Caco-2 (cell line): ENCODE measurements at regions of chr3 and their contacts with region 1.

Region 1: GRCh38 chr3:27659279-27660021 is 62.7 kb downstream of the EOMES start:
- DNase-seq: peak; percentile 62 to 72
- H3K4me3 ChIP-seq: no peak overlapping the region
- H3K4me3 Mint-ChIP-seq: no peak overlapping the region
- H3K27ac Mint-ChIP-seq: no peak overlapping the region
- H3K4me1 ChIP-seq: no peaks in the 10 kb centered on the region
- H3K4me1 Mint-ChIP-seq: no peaks in the 10 kb centered on the region
- H3K27me3 ChIP-seq: no peaks in the 10 kb centered on the region
- H3K27me3 Mint-ChIP-seq: no peaks in the 10 kb centered on the region
- CTCF ChIP-seq: peak; percentile 72 to 81

Region 2: DNA sequence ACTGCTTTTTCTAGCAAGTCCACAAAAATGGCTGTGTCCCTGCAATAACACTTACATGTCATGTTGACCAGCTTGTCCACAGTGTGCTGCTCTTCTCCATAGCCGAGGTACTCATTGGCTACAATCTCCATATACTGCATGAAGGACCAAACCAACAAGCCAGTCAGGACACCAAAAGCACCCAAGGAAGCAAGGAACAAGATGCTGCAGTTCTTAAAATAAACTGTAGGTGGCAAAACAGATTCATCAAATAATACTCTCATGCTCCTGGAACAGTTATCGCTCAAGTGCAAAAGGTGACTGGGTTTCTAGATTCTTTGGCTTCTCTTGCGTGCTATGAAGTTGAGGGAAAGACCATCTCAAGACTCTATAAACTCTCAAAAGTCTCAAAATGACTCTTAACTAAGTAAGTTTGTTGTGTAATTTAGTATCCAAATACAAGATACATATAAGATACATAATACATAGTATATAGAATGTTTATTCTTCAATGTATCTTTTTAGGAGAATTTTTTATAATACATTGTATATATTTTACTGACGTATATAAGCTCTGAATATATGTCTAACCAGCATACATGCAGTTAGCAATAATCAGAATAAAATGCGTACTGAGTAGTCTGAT is 347.3 kb before region 1 on chr3:
- CTCF ChIA-PET with region 1: no interaction called
- POLR2A ChIA-PET with region 1: no interaction called
- intact Hi-C with region 1: loop called (anchors 1 kb)
- DNase-seq: peak in 1 of 2 experiments; percentile 59
- H3K4me3 ChIP-seq: no peak overlapping the region
- H3K4me3 Mint-ChIP-seq: no peak overlapping the region
- H3K27ac Mint-ChIP-seq: no peak overlapping the region
- H3K4me1 ChIP-seq: peaks cover 3% of the 10 kb centered on the region; the same call in 1 of the 2 replicates
- H3K4me1 Mint-ChIP-seq: peaks cover 8% of the 10 kb centered on the region
- H3K27me3 ChIP-seq: no peaks in the 10 kb centered on the region
- H3K27me3 Mint-ChIP-seq: peaks cover 2% of the 10 kb centered on the region
- CTCF ChIP-seq: peak; percentile 45 to 64

Region 3: DNA sequence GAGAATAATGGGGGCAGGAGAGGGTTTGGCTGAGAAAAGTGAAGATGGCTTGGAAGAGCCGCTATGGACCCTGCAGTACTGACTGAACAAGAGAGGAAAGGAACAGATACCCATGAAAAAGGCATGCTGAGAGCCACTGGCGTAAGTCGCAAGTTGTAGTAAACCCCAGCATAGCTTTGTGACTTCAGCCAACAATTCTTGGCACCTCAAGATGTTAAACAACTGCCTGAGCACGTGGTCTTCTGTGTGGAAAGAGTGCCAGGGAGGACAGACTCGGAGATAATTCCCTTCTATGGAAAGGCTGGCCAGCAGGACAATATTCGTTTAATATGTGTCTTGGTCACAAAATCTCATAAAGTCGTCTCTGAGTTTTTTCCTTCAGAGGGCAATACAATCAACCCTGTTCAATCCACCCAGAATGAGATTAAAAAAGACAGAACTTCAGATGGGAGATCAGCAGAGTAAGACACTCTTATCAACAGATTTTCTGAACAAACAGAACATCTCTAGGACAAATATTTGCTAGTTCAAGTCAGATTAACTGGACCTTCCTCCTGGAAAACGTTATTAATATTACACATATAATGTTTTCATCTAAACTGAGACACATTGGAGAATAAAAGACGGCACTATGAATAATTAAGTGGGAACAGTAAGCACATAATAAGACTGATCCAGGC is 339.5 kb before region 1 on chr3:
- CTCF ChIA-PET with region 1: no interaction called
- POLR2A ChIA-PET with region 1: no interaction called
- intact Hi-C with region 1: loop called (anchors 1 kb)
- DNase-seq: no peak
- H3K4me3 ChIP-seq: no peak overlapping the region
- H3K4me3 Mint-ChIP-seq: no peak overlapping the region
- H3K27ac Mint-ChIP-seq: no peak overlapping the region
- H3K4me1 ChIP-seq: peaks cover 3% of the 10 kb centered on the region; the same call in 1 of the 2 replicates
- H3K4me1 Mint-ChIP-seq: peaks cover 8% of the 10 kb centered on the region
- H3K27me3 ChIP-seq: no peaks in the 10 kb centered on the region
- H3K27me3 Mint-ChIP-seq: no peaks in the 10 kb centered on the region
- CTCF ChIP-seq: no peak

Region 4: DNA sequence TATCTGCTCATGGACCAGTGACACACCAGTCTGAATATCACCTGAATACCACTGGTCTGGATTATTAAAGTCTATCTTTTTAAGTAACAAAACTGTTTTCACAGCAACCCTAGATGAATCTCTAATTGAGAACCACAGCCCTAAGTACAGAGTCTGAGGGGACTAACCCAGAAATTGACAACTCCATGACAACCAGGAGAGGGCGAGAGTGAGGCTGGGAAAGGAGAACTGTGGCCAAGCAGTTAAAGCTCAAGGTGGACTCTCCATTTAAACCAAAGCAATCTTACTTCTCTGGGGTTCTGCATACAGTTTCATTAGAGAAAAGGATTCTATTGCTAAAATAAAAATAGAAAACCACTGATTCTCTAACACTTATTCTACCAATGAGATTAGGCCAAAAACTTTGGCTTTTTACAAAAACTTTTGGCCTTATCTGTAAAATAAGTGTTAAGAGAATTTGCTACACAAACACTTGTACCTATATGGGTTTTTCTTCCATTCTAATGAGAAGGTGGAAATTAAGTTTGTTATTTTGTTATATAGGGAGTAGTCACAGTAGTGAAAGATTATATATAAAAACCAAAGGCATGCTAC is 301.7 kb before region 1 on chr3:
- CTCF ChIA-PET with region 1: no interaction called
- POLR2A ChIA-PET with region 1: no interaction called
- intact Hi-C with region 1: loop called (anchors 5 kb)
- DNase-seq: peak; percentile 49 to 64
- H3K4me3 ChIP-seq: no peak overlapping the region
- H3K4me3 Mint-ChIP-seq: no peak overlapping the region
- H3K27ac Mint-ChIP-seq: no peak overlapping the region
- H3K4me1 ChIP-seq: no peaks in the 10 kb centered on the region
- H3K4me1 Mint-ChIP-seq: no peaks in the 10 kb centered on the region
- H3K27me3 ChIP-seq: no peaks in the 10 kb centered on the region
- H3K27me3 Mint-ChIP-seq: peaks cover 10% of the 10 kb centered on the region
- CTCF ChIP-seq: peak in 1 of 2 experiments; percentile 73

Region 5: GRCh38 chr3:27643355-27643754 is 16.1 kb before region 1 on chr3:
- CTCF ChIA-PET with region 1: no interaction called
- POLR2A ChIA-PET with region 1: no interaction called
- intact Hi-C with region 1: loop called (anchors 1 kb)
- DNase-seq: no peak
- H3K4me3 ChIP-seq: no peak overlapping the region
- H3K4me3 Mint-ChIP-seq: no peak overlapping the region
- H3K27ac Mint-ChIP-seq: no peak overlapping the region
- H3K4me1 ChIP-seq: peaks cover 17% of the 10 kb centered on the region
- H3K4me1 Mint-ChIP-seq: no peaks in the 10 kb centered on the region
- H3K27me3 ChIP-seq: no peaks in the 10 kb centered on the region
- H3K27me3 Mint-ChIP-seq: no peaks in the 10 kb centered on the region
- CTCF ChIP-seq: no peak